ENCODE measurements at regions of chr11 and their contacts with region 1.

Region 1: DNA sequence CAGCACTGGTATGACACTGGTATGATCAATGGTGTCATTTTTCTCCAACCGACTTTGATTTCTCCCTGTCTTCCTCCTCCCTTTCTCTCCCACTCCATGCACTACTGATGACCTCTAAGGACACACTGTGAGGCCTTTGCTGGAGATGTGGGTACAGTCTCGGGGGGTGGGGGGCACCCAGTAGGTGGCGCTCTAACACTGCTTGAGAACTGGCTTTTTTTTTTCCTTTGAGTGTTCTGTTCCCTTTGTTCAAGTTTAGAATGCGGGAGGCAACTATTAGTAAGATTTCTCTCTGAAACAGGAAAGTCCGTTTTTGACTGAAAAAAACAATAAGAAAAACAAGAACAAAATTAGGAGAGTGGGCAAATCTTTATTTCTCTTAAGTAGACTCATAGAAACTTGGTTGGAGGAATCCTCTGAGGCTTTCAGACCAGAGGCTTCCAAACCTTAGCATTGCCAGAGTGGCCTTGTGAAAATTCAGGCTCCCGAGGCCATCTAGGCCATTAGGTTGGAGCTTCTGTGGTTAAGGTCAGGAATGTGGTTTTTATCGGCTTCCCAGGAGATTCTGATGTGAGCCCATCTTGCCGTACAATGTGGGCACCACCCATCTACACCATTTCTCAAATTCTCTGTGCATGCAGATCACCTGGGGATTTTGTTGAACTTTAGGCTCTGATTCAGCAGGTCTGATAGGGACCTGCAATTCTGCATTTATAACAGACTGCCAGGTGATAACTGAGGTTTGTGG is 43.2 kb downstream of the PANX1 start:
- DNase-seq: peak; percentile 41
- H3K4me3 ChIP-seq: no peak overlapping the region
- H3K27ac ChIP-seq: no peak overlapping the region
- H3K4me1 ChIP-seq: no peaks in the 10 kb centered on the region
- H3K27me3 ChIP-seq: no peaks in the 10 kb centered on the region
- CTCF ChIP-seq: peak; percentile 73

Region 2: DNA sequence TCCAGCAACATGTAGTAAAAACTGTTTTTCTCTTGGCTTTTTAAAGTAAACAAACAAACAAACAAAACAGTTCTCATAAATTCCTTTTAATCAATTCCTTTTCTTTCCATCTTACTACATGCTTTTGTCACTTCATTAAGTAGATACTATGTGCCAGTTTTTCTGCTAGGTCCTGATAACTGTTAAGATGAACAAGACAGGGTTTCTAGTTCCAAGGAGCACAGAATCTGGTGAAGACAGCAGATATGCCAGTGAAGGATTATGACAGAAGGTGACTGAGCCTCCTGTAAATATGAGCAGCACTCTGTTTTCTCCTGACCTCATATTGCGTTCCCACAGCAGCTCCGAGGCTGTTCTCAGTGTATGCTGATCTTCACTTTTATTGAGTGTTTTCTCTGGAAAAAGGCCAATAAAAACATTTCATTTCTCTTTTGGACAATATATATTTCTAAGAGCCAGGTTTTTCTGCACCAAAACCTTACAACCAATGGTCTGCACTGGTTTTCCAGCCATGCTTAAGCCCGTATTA is 104.9 kb before region 1 on chr11:
- intact Hi-C with region 1: no loop called
- DNase-seq: no peak
- H3K4me3 ChIP-seq: no peak overlapping the region
- H3K27ac ChIP-seq: no peak overlapping the region
- H3K4me1 ChIP-seq: no peaks in the 10 kb centered on the region
- H3K27me3 ChIP-seq: no peaks in the 10 kb centered on the region
- CTCF ChIP-seq: no peak

Region 3: DNA sequence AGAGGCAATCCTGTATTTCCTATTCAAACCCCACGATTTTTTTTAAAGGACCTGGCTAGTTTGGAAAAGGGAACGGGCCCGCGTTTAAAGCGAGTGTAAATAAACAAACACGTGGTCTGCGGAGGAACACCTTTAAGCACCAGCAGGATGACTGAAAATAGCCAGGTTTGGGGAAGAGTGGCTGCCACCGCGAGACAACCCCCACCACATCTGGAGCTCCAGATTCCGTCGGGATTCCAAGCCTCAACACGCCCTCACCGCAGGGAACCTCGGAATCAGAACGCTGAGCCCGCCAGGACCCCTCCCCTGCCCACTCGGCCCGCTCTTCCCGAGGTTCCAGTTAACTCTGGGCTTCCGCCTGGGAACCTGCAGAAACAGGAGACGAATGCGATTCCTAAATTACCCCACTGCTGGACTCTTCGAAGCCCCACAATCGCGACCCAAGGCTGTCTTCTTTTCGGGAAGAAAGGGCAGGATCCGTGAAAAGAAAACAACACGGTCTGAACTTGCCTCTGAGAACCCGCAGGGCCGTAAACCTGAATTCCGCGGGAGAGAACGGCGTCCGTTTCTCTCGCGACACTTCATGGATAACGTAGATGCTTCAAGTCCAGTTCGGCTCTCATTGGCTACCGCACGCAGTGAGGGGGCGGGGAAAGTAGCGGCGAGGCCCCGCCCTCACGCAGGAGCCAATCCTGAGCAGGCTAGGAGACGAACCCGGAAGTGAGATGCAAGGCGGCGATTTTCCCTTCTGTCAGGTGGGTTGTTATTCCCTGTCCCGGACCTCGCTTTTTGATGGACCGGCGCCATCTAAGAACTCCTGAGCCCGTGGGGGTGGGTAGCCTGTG is 321.6 kb after region 1 on chr11 and contains the starts of genes ANKRD49 and MRE11:
- intact Hi-C with region 1: loop called (anchors 10 kb)
- DNase-seq: peak; percentile 98
- H3K4me3 ChIP-seq: peak within 1 kb of the TSS; percentile 89
- H3K27ac ChIP-seq: peak within 1 kb of the TSS; percentile 70
- H3K4me1 ChIP-seq: peaks cover 7% of the 10 kb centered on the region
- H3K27me3 ChIP-seq: no peaks in the 10 kb centered on the region
- CTCF ChIP-seq: no peak
- total RNA-seq, gene ANKRD49: 10.7 to 14.6 TPM
- total RNA-seq, gene MRE11: 14.0 to 17.6 TPM

Measured in colonic mucosa (tissue), 4 donors.